ENCODE measurements at regions of chr3 and their contacts with region 1.

Region 1: GRCh38 chr3:44323341-44323955 is 15.1 kb upstream of the TCAIM start:
- DNase-seq: peak; percentile 17 to 46
- ATAC-seq: peak; percentile 47 to 80
- H3K4me3 ChIP-seq: no peak overlapping the region
- H3K27ac ChIP-seq: no peak overlapping the region
- H3K4me1 ChIP-seq: peaks cover 0 to 2% of the 10 kb centered on the region in 2 donors
- H3K27me3 ChIP-seq: no peaks in the 10 kb centered on the region
- CTCF ChIP-seq: peak; percentile 61 to 83 (median 76)
- POLR2A ChIP-seq: no peak

Region 2: DNA sequence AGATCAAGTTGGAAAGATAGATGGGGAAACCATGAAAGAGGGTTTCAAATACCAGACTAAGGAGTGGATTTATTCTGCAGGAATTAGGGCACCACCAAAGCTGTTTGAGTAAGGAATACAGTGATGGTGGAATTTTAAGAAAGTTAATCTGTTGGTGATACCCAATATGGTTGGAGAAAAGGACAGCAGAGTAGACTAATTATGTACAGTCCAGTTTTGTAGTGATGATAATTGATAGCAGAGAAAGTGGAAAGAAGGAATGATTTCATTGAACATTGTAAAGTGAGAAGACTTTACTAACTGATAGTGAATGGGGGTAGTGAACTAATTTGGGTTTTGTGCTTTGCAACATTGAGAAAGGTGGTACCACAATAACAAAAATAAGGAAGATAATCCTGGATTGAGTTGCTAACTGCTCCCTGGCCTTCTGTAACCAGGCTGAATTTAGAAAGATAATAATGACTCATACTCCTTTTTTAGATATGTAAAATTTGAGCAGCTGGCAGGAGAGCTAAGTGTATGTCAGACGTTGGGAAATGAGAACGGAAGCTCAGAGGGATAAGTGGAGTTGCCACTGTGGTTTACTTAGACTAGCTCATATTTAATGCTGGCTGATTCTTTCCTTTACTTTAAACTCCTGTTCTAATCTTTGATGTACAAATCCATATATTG is 32.0 kb after region 1 on chr3:
- in situ Hi-C with region 1: no loop called
- intact Hi-C with region 1: loop called (anchors 5 kb)
- DNase-seq: peak; percentile 32 to 61
- ATAC-seq: peak; percentile 100
- H3K4me3 ChIP-seq: no peak overlapping the region
- H3K27ac ChIP-seq: peak overlapping the region; percentile 82 to 89 (median 84)
- H3K4me1 ChIP-seq: peaks cover 31 to 36% of the 10 kb centered on the region in 2 donors
- H3K27me3 ChIP-seq: no peaks in the 10 kb centered on the region
- CTCF ChIP-seq: no peak
- POLR2A ChIP-seq: no peak

Region 3: DNA sequence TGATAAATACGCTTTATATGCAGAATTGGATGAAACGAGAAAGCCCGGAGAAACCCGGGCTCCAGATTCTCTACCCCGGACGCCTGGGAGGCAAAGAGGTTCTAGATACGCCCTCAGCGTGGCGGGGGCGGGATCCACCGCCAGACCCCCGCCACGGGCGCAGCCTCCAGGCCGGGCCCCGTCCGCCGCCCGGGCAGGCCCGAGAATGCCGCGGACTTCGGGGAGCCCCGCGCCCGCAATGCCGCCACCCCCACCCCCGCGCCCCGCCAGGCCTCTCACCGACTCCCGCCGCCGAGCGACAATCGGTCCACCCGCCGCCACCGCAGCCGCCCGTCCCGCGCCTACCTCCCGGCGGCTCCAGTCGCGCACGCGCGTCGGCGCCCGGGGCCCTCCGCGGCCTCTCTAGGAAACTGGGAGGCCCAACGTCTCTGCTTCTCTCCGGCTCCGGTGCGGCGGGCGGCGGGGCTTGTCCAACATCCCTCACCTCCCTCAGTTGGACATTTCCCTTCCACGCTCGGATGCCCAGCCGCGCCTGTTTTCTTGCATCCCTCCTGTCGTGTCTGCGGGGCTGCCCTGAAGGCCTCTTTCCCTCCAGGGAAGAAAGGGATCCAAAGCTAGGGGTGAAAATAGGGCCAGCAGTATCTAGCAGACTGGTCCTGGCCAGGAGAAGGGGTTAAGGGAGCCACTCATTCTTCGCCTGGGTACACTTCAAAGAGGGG is 154.0 kb after region 1 on chr3 and contains the start of gene ZNF445:
- in situ Hi-C with region 1: loop called in 1 of 4 experiments (anchors 25 kb)
- intact Hi-C with region 1: no loop called
- DNase-seq: peak; percentile 56 to 70
- ATAC-seq: peak; percentile 91 to 96
- H3K4me3 ChIP-seq: peak within 1 kb of the TSS; percentile 66 to 79 (median 70)
- H3K27ac ChIP-seq: peak within 1 kb of the TSS; percentile 34 to 82 (median 69)
- H3K4me1 ChIP-seq: peaks cover 14 to 19% of the 10 kb centered on the region in 2 donors
- H3K27me3 ChIP-seq: no peaks in the 10 kb centered on the region
- CTCF ChIP-seq: peak in 1 of 5 experiments; percentile 16
- POLR2A ChIP-seq: peak; percentile 20 to 30
- total RNA-seq, gene ZNF445: 3.6 to 6.2 (median 3.8) TPM

Region 4: DNA sequence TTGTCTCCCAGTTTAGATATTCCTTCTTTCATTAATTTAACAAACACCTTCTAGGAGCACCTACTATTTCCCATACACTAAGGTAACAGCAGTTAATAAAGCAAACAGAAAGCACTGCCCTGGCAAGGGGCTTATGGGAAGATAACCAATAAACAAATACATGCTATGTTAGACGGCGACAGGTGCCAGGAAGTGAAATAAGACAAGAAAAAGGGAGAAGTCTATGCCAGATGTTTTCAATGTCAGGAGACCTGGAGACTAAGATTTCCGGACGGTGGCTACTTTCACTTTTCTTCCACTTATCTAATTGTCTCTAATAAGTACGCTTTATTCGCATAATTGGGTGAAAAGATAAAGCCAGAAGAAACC is 186.5 kb after region 1 on chr3:
- in situ Hi-C with region 1: loop called in 1 of 4 experiments (anchors 25 kb)
- intact Hi-C with region 1: loop called (anchors 5 kb)
- DNase-seq: no peak
- ATAC-seq: no peak
- H3K4me3 ChIP-seq: peak overlapping the region; percentile 64 to 83 (median 77)
- H3K27ac ChIP-seq: peak overlapping the region; percentile 88 to 91 (median 89)
- H3K4me1 ChIP-seq: peaks cover 13 to 15% of the 10 kb centered on the region in 2 donors
- H3K27me3 ChIP-seq: no peaks in the 10 kb centered on the region
- CTCF ChIP-seq: no peak
- POLR2A ChIP-seq: no peak

Region 5: GRCh38 chr3:44624749-44625480 is 301.5 kb after region 1 on chr3 and contains the start of gene ZNF197:
- in situ Hi-C with region 1: loop called in 1 of 4 experiments (anchors 10 kb)
- intact Hi-C with region 1: loop called (anchors 5 kb)
- DNase-seq: peak; percentile 77 to 84
- ATAC-seq: peak; percentile 98 to 99
- H3K4me3 ChIP-seq: peak within 1 kb of the TSS; percentile 69 to 93 (median 81)
- H3K27ac ChIP-seq: peak within 1 kb of the TSS; percentile 82 to 93 (median 92)
- H3K4me1 ChIP-seq: peaks cover 11 to 30% of the 10 kb centered on the region in 2 donors
- H3K27me3 ChIP-seq: no peaks in the 10 kb centered on the region
- CTCF ChIP-seq: peak in 1 of 5 experiments; percentile 40
- POLR2A ChIP-seq: peak in 1 of 2 donors; percentile 58
- total RNA-seq, gene ZNF197: 14.3 to 21.5 (median 19.6) TPM

Region 6: GRCh38 chr3:44861412-44862220 is 538.2 kb after region 1 on chr3 and contains the start of gene TMEM42:
- in situ Hi-C with region 1: no loop called
- intact Hi-C with region 1: loop called (anchors 5 kb)
- DNase-seq: peak; percentile 77 to 85
- ATAC-seq: peak; percentile 96 to 97
- H3K4me3 ChIP-seq: peak within 1 kb of the TSS; percentile 70 to 92 (median 81)
- H3K27ac ChIP-seq: peak within 1 kb of the TSS; percentile 84 to 97 (median 90)
- H3K4me1 ChIP-seq: peaks cover 11 to 17% of the 10 kb centered on the region in 2 donors
- H3K27me3 ChIP-seq: no peaks in the 10 kb centered on the region
- CTCF ChIP-seq: no peak
- POLR2A ChIP-seq: peak; percentile 84
- total RNA-seq, gene TMEM42: 7.2 to 19.7 (median 14.9) TPM

Region 7: DNA sequence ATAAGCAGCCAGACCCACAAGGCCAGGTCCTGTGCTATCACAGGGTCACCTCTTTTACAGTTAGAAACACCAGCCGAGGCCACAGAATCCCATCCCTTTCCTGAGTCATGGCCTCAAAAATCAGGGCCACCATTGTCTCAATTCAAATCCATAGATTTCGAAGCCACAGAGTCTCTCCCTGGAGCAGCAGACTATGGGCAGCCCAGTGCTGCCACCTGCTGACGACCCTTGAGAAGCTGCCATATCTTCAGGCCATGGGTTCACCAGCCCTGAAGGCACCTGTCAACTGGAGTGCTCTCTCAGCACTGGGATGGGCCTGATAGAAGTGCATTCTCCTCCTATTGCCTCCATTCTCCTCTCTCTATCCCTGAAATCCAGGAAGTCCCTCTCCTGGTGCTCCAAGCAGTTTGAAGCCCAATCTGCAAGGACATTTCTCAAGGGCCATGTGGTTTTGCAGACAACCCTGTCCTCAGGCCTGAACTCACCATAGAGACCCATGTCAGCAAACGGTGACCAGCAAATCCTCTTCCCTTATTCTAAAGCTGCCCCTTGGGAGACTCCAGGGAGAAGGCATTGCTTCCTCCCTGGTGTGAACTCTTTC is 590.5 kb after region 1 on chr3:
- in situ Hi-C with region 1: no loop called
- intact Hi-C with region 1: loop called (anchors 10 kb)
- DNase-seq: peak; percentile 17 to 33
- ATAC-seq: peak; percentile 47 to 66
- H3K4me3 ChIP-seq: no peak overlapping the region
- H3K27ac ChIP-seq: no peak overlapping the region
- H3K4me1 ChIP-seq: no peaks in the 10 kb centered on the region
- H3K27me3 ChIP-seq: peaks cover 0 to 5% (median 0%) of the 10 kb centered on the region in 3 donors
- CTCF ChIP-seq: peak; percentile 37 to 73 (median 64)
- POLR2A ChIP-seq: no peak